ENCODE measurements at regions of chr2 and their contacts with region 1.

Region 1: DNA sequence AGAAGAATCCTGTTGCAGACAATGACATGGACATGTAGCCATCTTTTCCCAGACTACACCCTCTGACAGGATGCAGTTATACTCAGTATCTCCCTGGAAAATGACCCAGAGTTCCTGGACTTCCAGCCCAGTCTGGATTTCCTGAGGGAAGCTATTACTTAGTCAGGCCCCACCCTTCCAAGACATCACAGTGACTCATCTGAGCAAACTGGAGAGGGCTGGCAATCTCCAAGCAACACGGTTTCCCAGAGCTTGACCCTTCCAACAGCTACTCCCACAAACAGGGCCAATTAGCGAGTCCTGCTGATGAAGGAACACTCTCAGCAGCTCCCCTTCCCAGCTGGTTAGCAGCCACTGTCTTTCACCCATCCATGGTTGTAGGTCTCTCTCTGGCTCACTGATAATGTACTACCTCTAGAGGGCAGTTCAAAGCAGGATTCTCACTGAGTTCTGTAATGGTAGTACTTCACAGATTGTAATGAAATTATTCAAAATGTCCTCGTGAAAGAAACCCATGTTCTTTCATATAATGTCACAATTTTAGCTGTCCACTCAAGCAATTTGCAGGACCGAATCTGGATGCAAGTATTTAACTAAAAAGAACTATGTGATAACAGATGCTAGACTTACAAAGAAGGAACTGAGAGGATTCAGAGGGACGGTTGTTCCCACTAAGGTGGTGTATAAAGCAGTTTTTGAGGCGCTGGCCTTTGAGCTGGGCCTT is 110.2 kb downstream of the MDH1 start:
- DNase-seq: no peak
- H3K4me3 Mint-ChIP-seq: no peak overlapping the region
- H3K27ac Mint-ChIP-seq: no peak overlapping the region
- H3K4me1 Mint-ChIP-seq: peaks cover 5% of the 10 kb centered on the region
- H3K27me3 Mint-ChIP-seq: no peaks in the 10 kb centered on the region

Region 2: DNA sequence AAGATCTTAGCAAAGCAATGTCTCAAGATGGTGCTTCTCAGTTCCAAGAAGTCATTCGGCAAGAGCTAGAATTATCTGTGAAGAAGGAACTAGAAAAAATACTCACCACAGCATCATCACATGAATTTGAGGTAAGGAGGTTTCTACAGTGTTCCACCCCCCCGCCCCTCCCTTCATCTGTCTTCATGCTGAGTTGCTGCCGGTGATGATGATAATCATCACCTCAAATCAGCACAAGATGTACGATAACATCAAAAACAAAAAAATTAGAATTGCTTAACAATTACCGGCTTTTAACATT is 157.3 kb after region 1 on chr2:
- CTCF ChIA-PET with region 1: interaction called, 53 read pairs
- DNase-seq: peak; percentile 75
- H3K4me3 Mint-ChIP-seq: peak overlapping the region; percentile 53
- H3K27ac Mint-ChIP-seq: peak overlapping the region; percentile 99
- H3K4me1 Mint-ChIP-seq: peaks cover 77% of the 10 kb centered on the region
- H3K27me3 Mint-ChIP-seq: no peaks in the 10 kb centered on the region

Region 3: GRCh38 chr2:63861220-63861822 is 162.3 kb after region 1 on chr2:
- CTCF ChIA-PET with region 1: interaction called, 53 read pairs
- DNase-seq: peak; percentile 71
- H3K4me3 Mint-ChIP-seq: no peak overlapping the region
- H3K27ac Mint-ChIP-seq: no peak overlapping the region
- H3K4me1 Mint-ChIP-seq: peaks cover 52% of the 10 kb centered on the region
- H3K27me3 Mint-ChIP-seq: no peaks in the 10 kb centered on the region

Region 4: GRCh38 chr2:63888490-63889402 is 189.8 kb after region 1 on chr2:
- CTCF ChIA-PET with region 1: interaction called, 10 read pairs
- DNase-seq: peak; percentile 58
- H3K4me3 Mint-ChIP-seq: no peak overlapping the region
- H3K27ac Mint-ChIP-seq: peak overlapping the region; percentile 63
- H3K4me1 Mint-ChIP-seq: no peaks in the 10 kb centered on the region
- H3K27me3 Mint-ChIP-seq: no peaks in the 10 kb centered on the region